ENCODE measurements at regions of chr2 and their contacts with region 1.

Region 1: GRCh38 chr2:134727385-134727784 is 8.6 kb upstream of the TMEM163 start:
- DNase-seq: no peak
- ATAC-seq: no peak
- H3K4me3 ChIP-seq: no peak overlapping the region
- H3K4me3 Mint-ChIP-seq: no peak overlapping the region
- H3K27ac ChIP-seq: no peak overlapping the region
- H3K27ac Mint-ChIP-seq: no peak overlapping the region
- H3K4me1 ChIP-seq: no peaks in the 10 kb centered on the region
- H3K4me1 Mint-ChIP-seq: no peaks in the 10 kb centered on the region
- H3K27me3 ChIP-seq: peaks cover 2% of the 10 kb centered on the region
- H3K27me3 Mint-ChIP-seq: peaks cover 8% of the 10 kb centered on the region in 2 donors
- CTCF ChIP-seq: no peak

Region 2: DNA sequence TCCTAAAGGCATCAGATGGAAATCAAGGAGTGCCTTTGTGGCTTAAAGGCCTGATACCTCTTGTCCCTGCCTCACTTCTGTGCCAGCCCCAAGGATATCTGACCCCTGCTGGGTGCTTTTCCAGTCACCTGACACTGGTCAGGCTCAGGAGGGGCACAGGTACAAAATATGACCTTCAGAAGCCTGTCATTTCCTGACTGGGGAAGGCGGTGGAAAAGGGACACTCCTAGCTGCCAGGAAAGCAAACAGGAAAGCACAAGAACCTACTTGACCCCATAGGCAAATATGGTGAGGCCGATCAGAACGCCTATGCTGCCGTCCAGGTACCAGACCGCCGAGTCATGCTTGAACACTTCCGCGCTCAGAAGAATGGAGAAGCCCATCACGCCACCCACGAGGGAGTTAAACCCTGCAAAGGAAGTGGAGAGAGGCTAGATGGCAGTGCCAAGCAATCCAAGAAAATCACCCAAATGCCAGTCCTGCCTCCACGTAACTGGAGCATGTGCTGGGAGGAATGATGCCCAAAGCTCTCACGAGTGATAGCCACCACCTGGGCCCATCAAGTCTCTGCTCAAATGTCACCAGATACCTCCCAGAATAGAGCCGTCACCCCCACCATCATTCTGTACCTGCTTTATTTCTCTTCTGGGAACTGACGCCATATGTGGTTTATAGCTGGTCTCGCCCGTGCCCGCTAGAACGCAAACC is 269.5 kb before region 1 on chr2:
- intact Hi-C with region 1: loop called (anchors 10 kb)
- DNase-seq: no peak
- ATAC-seq: no peak
- H3K4me3 ChIP-seq: no peak overlapping the region
- H3K4me3 Mint-ChIP-seq: no peak overlapping the region
- H3K27ac ChIP-seq: no peak overlapping the region
- H3K27ac Mint-ChIP-seq: no peak overlapping the region
- H3K4me1 ChIP-seq: no peaks in the 10 kb centered on the region
- H3K4me1 Mint-ChIP-seq: peaks cover 0 to 14% of the 10 kb centered on the region in 2 donors
- H3K27me3 ChIP-seq: no peaks in the 10 kb centered on the region
- H3K27me3 Mint-ChIP-seq: no peaks in the 10 kb centered on the region
- CTCF ChIP-seq: no peak

Measured in natural killer cell (primary cell).